Activated T-helper 1 cell treated with anti-CD3 and anti-CD28 coated beads, Interleukin-12 subunit alpha, Interleukin-12 subunit beta, Interleukin-2, Interleukin-4 antibody, amounts not matched to agents 30 ng/mL and 10 ng/mL and 1 ng/mL, durations not matched to agents 14 hours and 24 hours and 36 hours (primary cell): ENCODE measurements at regions of chr15 and their contacts with region 1.

Region 1: GRCh38 chr15:74615508-74616365 is at the start of gene CLK3:
- DNase-seq: peak; percentile 94
- H3K4me3 Mint-ChIP-seq: peak within 1 kb of the TSS; percentile 93
- H3K27ac Mint-ChIP-seq: peak within 1 kb of the TSS; percentile 95
- H3K4me1 Mint-ChIP-seq: peaks cover 33% of the 10 kb centered on the region
- H3K27me3 Mint-ChIP-seq: peaks cover 5% of the 10 kb centered on the region
- total RNA-seq, gene CLK3: 103 and 107 TPM in 2 replicates

Region 2: GRCh38 chr15:74365611-74366440 is 249.9 kb before region 1 on chr15:
- intact Hi-C with region 1: no loop called
- DNase-seq: no peak
- H3K4me3 Mint-ChIP-seq: peak overlapping the region; percentile 65
- H3K27ac Mint-ChIP-seq: no peak overlapping the region
- H3K4me1 Mint-ChIP-seq: peaks cover 5% of the 10 kb centered on the region
- H3K27me3 Mint-ChIP-seq: peaks cover 55% of the 10 kb centered on the region

Region 3: DNA sequence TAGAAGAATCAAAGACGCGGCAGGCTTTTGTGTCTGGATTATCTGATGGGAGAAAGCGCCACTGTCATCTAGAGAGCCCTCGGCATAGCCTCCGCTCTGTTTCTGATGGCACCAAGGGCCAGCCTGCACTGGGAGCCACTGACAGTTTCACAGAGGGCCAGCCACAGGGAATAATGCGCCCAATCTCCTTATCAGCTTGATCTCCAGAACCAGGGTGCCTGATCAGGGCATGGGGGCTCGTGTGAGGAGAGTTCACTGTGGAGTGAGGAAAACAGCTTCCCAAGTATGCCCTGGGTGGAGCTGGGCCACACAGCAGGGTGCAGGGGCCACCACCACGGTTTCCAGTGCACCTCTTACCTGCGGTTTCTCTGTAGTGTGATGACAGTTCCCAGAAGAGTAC is 29.9 kb before region 1 on chr15:
- intact Hi-C with region 1: no loop called
- DNase-seq: no peak
- H3K4me3 Mint-ChIP-seq: no peak overlapping the region
- H3K27ac Mint-ChIP-seq: no peak overlapping the region
- H3K4me1 Mint-ChIP-seq: peaks cover 11% of the 10 kb centered on the region
- H3K27me3 Mint-ChIP-seq: no peaks in the 10 kb centered on the region

Region 4: GRCh38 chr15:74598126-74598842 is 17.5 kb before region 1 on chr15:
- intact Hi-C with region 1: loop called (anchors 1 kb)
- DNase-seq: peak; percentile 87
- H3K4me3 Mint-ChIP-seq: peak overlapping the region; percentile 100
- H3K27ac Mint-ChIP-seq: peak overlapping the region; percentile 100
- H3K4me1 Mint-ChIP-seq: peaks cover 19% of the 10 kb centered on the region
- H3K27me3 Mint-ChIP-seq: no peaks in the 10 kb centered on the region